ENCODE measurements at regions of chr5 and their contacts with region 1.

Region 1: DNA sequence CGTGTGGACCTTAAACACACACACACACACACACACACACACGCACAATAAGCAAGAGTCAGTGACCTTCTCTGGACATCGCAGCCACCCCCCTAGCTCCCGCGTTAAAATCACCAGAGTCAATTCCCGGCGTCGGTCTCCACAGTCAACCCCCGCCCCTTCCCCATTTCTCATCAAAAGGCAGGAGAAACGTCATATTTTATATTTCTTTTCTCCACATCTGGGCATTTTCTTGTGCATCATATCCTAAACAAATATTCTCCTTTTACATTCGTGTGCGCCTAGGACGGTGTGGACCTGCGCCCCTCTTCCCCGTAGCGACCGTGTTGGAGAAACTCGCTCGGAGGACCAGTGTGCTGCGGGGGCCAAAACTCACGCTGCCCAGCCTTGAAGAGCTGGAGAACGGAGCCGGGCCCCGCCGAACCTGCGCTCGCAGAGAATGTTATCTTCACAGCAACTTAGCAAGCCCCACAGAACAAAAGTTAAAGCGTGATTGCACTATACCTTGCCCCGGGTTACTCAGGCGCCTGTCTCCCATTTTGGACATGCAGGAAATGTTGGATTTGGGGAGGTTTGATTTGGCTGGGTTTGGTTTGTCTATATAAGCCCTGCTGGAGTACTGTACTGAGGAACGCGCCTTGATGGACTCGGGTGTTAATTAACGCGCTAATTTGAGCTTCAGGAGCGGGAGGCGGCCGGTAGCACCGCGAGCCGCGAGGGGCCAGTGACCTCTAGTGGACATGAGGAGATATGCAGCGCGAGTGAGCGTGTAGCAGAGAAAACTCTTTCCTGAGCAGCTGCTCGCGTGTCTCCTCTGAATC is 192.4 kb downstream of the MEF2C start:
- DNase-seq: peak; percentile 77
- H3K4me3 Mint-ChIP-seq: peak overlapping the region; percentile 65
- H3K27ac Mint-ChIP-seq: peak overlapping the region; percentile 81
- H3K4me1 Mint-ChIP-seq: peaks cover 28% of the 10 kb centered on the region
- H3K27me3 Mint-ChIP-seq: peaks cover 84% of the 10 kb centered on the region

Region 2: DNA sequence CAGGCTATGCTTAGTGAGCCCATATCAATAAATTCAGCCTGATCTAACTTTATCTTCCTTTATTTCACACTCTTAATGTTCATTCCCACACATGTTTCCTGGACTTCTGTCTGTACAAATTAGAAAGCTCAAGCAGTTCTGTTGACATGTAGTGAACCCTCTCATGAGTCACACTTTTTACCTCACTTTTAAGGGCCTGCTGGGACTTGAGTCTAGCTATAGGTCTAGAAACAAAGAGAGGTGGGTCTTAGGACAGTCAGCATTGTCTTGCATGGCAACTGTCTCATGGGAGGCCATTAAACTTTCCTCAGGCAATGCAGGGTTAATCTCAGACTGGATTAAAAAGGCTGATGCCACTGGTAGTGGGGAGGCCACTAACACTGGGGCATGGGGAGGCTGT is 1269.3 kb before region 1 on chr5:
- CTCF ChIA-PET with region 1: no interaction called
- intact Hi-C with region 1: loop called (anchors 2 kb)
- DNase-seq: no peak
- H3K4me3 Mint-ChIP-seq: no peak overlapping the region
- H3K27ac Mint-ChIP-seq: no peak overlapping the region
- H3K4me1 Mint-ChIP-seq: no peaks in the 10 kb centered on the region
- H3K27me3 Mint-ChIP-seq: no peaks in the 10 kb centered on the region

Region 3: DNA sequence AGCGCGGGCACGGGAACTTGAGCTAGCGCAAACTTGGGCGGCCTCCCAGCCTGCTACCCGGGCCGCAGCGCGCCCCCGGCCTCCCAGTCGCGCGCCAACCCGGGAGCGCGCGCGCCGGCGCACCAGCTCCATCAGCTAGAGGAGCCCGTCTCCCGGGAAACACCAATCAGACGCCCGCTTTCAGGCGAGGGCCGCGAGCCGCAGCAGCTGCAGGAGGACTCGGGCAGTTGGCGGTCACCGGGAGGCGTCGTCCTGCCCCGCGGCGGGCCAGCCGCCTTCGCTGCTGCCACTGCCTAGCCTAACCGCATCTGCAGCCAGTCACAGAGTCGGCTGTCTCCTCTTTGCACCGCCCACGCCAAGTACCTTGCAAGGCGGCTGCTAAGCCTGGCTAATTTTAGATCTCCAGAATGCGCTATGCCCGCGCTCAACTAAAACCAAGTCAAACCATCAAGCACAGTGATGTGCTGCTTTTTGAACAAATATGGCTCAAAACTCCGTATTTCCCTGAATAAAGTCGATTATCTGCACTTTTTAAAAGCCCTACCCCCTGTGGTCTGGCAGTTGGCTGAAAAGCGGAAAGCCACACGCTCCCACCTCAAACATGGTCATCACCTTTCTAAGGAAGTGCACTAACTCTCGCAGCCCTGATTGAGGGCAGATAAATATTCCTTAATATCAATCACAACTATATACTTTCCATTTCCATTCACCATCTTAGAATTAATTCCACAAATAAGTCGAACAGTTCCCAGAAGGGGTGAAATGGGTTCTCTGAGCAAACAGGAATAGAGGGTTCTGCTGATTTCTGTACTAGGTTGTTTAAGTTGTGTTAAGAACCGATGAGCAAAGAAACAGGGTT is 29.4 kb before region 1 on chr5:
- CTCF ChIA-PET with region 1: interaction called, 13 read pairs
- intact Hi-C with region 1: loop called (anchors 1 kb)
- DNase-seq: peak; percentile 51
- H3K4me3 Mint-ChIP-seq: peak overlapping the region; percentile 56
- H3K27ac Mint-ChIP-seq: no peak overlapping the region
- H3K4me1 Mint-ChIP-seq: peaks cover 13% of the 10 kb centered on the region
- H3K27me3 Mint-ChIP-seq: peaks cover 64% of the 10 kb centered on the region